ENCODE measurements at regions of chr22 and their contacts with region 1.

Region 1: GRCh38 chr22:41448189-41448808 is 1.7 kb upstream of the TOB2 start:
- DNase-seq: peak; percentile 97
- ATAC-seq: peak; percentile 89
- H3K4me3 ChIP-seq: peak overlapping the region; percentile 19 to 96
- H3K27ac ChIP-seq: peak overlapping the region; percentile 90 to 93
- H3K4me1 ChIP-seq: no peaks in the 10 kb centered on the region
- H3K27me3 ChIP-seq: peaks cover 0 to 2% of the 10 kb centered on the region in 2 donors

Region 2: DNA sequence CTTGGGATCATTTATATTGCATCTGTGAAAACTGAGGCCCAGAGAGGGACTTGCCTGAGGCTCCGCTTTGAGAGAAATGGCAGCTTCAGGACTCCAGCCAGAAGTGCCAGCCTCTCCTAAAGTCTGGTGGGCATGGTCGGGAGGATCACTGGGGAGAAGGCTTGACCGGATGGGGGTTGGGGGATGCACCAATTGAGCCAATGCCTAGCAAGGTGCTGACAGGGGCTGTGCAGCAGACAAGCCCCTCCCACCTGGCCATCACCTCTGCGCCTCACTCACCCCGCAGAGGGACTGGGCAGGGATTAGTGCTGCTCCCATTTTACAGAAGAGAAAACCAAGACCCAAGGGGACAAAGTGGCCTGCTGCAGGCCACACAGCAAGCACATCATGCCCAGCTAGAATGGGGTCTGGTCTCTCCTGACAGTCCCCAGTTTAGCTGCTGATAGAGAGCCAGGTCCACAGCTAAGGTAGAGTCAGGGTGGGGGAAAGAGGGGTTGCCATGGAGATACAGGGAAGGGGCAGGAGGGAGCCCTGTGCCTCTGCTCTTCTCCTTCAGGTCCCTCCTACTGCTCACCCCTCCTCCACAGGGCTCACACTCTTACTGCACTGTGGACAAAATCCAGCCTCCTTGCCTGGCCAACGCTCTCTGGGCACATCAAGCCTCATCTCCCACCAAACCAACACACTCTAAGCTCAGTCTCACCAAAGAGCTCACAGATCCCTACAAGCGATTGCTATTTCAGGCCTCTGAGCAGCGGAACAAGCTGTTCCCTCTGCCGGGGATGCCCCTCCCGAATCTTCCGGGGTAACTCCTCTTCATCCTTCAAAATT is 37.1 kb before region 1 on chr22:
- intact Hi-C with region 1: loop called in 1 of 2 experiments (anchors 2 kb)
- DNase-seq: no peak
- ATAC-seq: no peak
- H3K4me3 ChIP-seq: no peak overlapping the region
- H3K27ac ChIP-seq: peak overlapping the region; percentile 62 to 93
- H3K4me1 ChIP-seq: no peaks in the 10 kb centered on the region
- H3K27me3 ChIP-seq: no peaks in the 10 kb centered on the region

Region 3: DNA sequence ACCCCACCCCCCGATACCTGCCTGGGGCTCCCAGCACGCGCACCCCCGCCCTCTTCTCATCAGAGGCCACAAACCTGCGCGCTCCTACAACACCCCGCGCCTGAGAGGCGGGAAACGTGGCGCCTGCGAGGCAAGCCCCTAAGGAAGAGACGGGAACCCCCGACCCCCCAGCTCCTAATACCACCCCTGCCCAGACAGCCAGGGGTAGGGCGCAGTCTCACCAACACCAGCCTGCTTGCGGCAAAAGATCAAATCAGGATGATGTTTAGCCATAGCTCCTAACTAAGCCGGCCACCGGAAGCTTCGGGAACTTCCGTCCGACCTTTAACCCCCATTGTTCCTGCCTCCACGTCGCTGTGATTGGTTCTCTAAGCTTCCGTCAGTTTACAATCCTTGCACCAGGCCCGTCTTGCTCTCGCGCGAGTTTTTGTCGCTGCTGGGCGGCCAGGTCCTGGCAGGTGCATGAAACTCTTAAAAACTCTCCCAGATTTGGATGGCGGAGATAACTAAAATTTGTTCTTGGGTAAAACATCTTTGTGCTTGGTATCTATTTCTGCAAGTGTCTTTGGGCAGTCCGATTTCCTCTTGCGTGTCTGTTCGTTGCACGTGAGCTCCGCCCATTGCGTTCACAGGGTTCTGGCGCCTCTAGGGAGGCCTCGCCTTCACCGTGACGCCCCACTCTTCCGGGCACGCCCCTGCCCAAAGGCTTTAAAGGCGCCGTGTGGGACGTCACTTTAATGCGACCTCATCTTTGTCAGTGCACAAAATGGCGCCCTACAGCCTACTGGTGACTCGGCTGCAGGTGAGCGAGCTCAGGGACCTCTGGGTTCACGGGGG is 20.3 kb after region 1 on chr22 and contains the starts of genes ACO2 and PHF5A:
- intact Hi-C with region 1: loop called in 1 of 2 experiments (anchors 2 kb)
- DNase-seq: peak; percentile 98 to 99
- ATAC-seq: peak; percentile 100
- H3K4me3 ChIP-seq: peak within 1 kb of the TSS; percentile 35 to 73
- H3K27ac ChIP-seq: peak within 1 kb of the TSS; percentile 56 to 74
- H3K4me1 ChIP-seq: peaks cover 0 to 4% of the 10 kb centered on the region in 2 donors
- H3K27me3 ChIP-seq: no peaks in the 10 kb centered on the region
- total RNA-seq, gene ACO2: 53.7 to 60.7 TPM
- total RNA-seq, gene PHF5A: 22.5 to 27.0 TPM

Region 4: GRCh38 chr22:41479671-41480396 is 31.5 kb after region 1 on chr22:
- intact Hi-C with region 1: loop called in 1 of 2 experiments (anchors 5 kb)
- DNase-seq: peak; percentile 61 to 68
- ATAC-seq: peak; percentile 65
- H3K4me3 ChIP-seq: no peak overlapping the region
- H3K27ac ChIP-seq: peak overlapping the region in 1 of 2 donors; percentile 93
- H3K4me1 ChIP-seq: peaks cover 3 to 4% of the 10 kb centered on the region in 2 donors
- H3K27me3 ChIP-seq: no peaks in the 10 kb centered on the region

Region 5: GRCh38 chr22:41526837-41527799 is 78.8 kb after region 1 on chr22:
- intact Hi-C with region 1: loop called in 1 of 2 experiments (anchors 5 kb)
- DNase-seq: peak in 1 of 2 donors; percentile 88
- ATAC-seq: peak; percentile 54
- H3K4me3 ChIP-seq: no peak overlapping the region
- H3K27ac ChIP-seq: peak overlapping the region in 1 of 2 donors; percentile 13
- H3K4me1 ChIP-seq: no peaks in the 10 kb centered on the region
- H3K27me3 ChIP-seq: no peaks in the 10 kb centered on the region

Region 6: GRCh38 chr22:41582694-41583093 is 134.4 kb after region 1 on chr22:
- intact Hi-C with region 1: no loop called
- DNase-seq: no peak
- ATAC-seq: no peak
- H3K4me3 ChIP-seq: no peak overlapping the region
- H3K27ac ChIP-seq: no peak overlapping the region
- H3K4me1 ChIP-seq: no peaks in the 10 kb centered on the region
- H3K27me3 ChIP-seq: no peaks in the 10 kb centered on the region

Region 7: GRCh38 chr22:41772645-41773044 is 324.3 kb after region 1 on chr22:
- intact Hi-C with region 1: no loop called
- DNase-seq: no peak
- ATAC-seq: no peak
- H3K4me3 ChIP-seq: no peak overlapping the region
- H3K27ac ChIP-seq: no peak overlapping the region
- H3K4me1 ChIP-seq: no peaks in the 10 kb centered on the region
- H3K27me3 ChIP-seq: no peaks in the 10 kb centered on the region